Activated naive CD4-positive, alpha-beta T cell treated with anti-CD3 and anti-CD28 coated beads for 36 hours (primary cell): ENCODE measurements at regions of chr5 and their contacts with region 1.

Region 1: DNA sequence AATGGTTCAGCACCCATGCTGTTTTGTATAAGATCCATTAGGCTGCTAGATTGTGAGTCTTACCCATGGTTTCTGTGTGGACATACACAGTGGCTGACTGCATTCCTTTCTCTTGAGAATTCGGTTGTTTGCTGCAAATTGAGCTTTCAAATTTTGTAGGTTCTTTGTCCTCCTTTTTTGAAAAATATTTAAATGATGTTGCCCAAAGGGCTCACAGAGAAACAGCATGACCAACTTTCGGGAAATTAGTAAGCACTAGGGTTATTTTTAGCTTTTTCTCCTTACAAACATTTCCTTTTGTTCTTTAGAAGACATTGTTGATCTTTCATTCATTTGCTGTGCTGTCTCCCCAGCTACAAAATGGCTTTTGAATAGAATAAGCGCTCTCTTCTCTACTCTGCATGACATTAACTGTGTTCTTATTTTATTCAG is 79.4 kb downstream of the NLN start:
- DNase-seq: no peak
- H3K4me3 Mint-ChIP-seq: no peak overlapping the region
- H3K27ac Mint-ChIP-seq: no peak overlapping the region
- H3K4me1 Mint-ChIP-seq: peaks cover 33% of the 10 kb centered on the region
- H3K27me3 Mint-ChIP-seq: no peaks in the 10 kb centered on the region

Region 2: GRCh38 chr5:65774346-65774745 is 27.0 kb before region 1 on chr5:
- CTCF ChIA-PET with region 1: no interaction called
- intact Hi-C with region 1: loop called (anchors 2 kb)
- DNase-seq: no peak
- H3K4me3 Mint-ChIP-seq: no peak overlapping the region
- H3K27ac Mint-ChIP-seq: no peak overlapping the region
- H3K4me1 Mint-ChIP-seq: peaks cover 23% of the 10 kb centered on the region
- H3K27me3 Mint-ChIP-seq: no peaks in the 10 kb centered on the region

Region 3: DNA sequence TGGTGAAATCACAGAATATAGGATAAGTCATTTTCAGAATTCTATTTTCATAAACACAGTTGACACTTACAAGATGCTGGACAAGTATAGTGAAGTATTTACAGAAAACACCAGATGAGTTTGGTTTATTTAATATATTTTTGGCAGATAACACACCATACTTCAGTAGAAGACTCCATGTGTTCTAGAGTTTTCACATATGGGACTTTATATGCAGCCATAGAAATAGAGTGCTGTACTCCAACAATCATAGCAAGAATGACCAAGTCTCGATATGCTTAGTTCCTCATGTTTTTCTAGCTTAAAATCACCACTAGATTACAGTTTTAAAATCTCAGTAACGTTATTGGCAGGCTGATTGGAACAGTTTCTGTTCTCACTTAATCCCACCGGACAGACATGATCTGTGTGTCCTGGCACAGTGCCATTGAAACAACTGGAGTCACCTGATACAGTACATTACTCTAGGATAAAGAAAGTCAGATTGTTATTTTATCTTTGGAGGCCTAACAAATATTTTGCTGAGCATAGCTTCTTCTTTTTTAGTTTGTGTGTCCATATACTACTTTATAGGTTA is 79.2 kb after region 1 on chr5:
- CTCF ChIA-PET with region 1: no interaction called
- intact Hi-C with region 1: loop called (anchors 2 kb)
- DNase-seq: no peak
- H3K4me3 Mint-ChIP-seq: no peak overlapping the region
- H3K27ac Mint-ChIP-seq: no peak overlapping the region
- H3K4me1 Mint-ChIP-seq: no peaks in the 10 kb centered on the region
- H3K27me3 Mint-ChIP-seq: no peaks in the 10 kb centered on the region